Posterior vena cava (tissue), 2 donors: ENCODE measurements at regions of chr14 and their contacts with region 1.

Region 1: GRCh38 chr14:91185721-91186120 is 58.8 kb downstream of the GPR68 start:
- DNase-seq: no peak

Region 2: DNA sequence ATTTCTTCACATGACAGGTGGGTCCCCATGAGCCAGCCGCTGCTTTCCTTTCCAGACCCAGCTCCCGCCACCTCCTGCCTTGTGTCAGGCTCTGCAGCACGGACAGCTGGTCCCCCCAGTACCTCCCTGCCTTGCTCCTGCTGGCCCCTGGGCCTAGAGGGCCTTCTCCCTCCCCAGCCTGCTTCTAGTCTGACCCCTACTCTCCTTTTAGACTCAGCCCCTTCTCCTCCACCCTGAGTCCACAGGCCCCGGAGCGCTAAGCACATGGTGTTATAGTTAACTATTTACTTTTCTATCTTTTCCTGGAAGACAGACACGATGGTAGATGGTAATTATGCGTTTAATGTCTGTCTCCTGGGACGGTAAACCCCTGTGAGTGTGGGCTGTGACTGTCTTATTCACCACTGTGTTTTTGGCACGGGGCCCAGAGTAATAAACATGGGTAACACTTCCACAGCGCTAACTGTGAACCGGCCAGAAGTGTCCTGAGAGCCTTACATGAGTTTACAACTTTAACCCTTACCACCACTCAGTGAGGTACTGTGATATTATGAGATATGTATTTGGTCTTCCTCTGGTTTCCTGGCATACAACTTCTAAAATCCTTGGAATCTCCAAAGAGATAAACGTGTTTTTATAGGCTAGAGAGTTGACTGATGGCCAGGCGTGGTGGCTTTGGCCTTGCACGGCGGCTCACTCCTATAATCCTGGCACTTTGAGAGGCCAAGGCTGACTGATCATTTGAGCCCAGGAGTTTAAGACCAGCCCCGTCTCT is 30.7 kb before region 1 on chr14:
- intact Hi-C with region 1: no loop called
- DNase-seq: peak; percentile 13

Region 3: GRCh38 chr14:91281346-91281745 is 95.6 kb after region 1 on chr14:
- intact Hi-C with region 1: no loop called
- DNase-seq: peak; percentile 47

Region 4: DNA sequence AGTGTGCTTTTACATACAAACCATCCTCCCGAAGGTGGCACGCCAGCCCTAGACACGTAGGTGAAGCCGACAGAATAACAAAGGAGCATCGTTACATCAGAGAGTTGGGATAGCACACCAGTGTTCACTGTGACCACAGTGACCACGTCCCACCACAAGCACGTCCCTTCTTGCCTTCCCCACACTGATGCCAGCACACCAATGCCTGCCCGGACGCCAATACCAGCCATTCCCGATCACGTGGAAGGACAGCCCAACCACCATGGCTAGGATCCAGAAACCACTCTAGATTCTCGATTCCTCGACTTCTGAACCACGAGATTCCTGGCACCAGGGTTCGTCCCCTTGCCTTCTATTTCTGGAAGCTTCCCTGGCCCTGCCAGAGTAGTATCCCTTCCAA is 106.8 kb after region 1 on chr14:
- intact Hi-C with region 1: loop called in 1 of 2 experiments (anchors 2 kb)
- DNase-seq: peak; percentile 60